Activated naive CD4-positive, alpha-beta T cell treated with anti-CD3 and anti-CD28 coated beads for 36 hours (primary cell): ENCODE measurements at regions of chr14 and their contacts with region 1.

Region 1: GRCh38 chr14:22099942-22100763 is 426.5 kb upstream of the OR4E1 start:
- DNase-seq: peak; percentile 77
- H3K4me3 Mint-ChIP-seq: no peak overlapping the region
- H3K27ac Mint-ChIP-seq: peak overlapping the region; percentile 73
- H3K4me1 Mint-ChIP-seq: peaks cover 35% of the 10 kb centered on the region
- H3K27me3 Mint-ChIP-seq: no peaks in the 10 kb centered on the region

Region 2: DNA sequence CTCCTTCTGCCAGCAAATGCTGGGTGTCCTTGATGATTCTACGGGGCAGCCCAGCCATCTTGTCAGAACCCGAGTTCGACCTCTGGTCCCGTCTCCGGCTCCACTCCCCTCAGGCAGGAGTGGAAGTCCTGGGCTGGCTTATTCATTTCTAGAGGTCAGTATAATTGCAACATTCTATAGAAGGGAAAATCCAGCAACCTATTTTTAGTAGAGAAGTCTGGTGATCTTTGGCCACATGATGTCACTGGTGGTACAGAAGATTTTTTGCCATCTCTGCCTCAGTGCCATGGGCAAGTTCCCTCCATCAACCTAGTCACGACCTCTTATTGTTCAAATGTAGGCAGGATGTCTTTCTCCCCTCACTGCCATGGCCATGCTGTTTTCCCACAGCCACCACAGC is 487.8 kb before region 1 on chr14:
- CTCF ChIA-PET with region 1: no interaction called
- intact Hi-C with region 1: no loop called
- DNase-seq: no peak
- H3K4me3 Mint-ChIP-seq: peak overlapping the region; percentile 1
- H3K27ac Mint-ChIP-seq: no peak overlapping the region
- H3K4me1 Mint-ChIP-seq: no peaks in the 10 kb centered on the region
- H3K27me3 Mint-ChIP-seq: no peaks in the 10 kb centered on the region

Region 3: DNA sequence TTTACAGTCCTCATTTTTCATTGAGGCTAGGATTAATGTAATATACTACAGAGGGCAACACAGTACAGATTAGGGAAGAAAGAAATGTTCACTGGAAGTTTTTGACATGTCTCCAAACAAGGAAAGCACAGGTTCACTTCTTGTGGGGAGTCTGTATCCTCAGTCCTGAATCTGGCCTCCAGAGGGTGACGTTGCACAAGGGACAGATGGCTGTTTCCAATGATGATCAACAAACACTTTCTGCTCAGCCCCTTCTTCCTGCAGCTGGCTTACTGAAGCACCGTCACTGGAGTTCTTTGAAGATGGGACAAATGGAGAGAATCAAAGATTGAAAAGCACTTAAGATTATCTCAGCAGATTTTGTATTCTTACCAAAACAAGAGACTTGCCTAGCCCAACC is 303.2 kb before region 1 on chr14:
- CTCF ChIA-PET with region 1: no interaction called
- intact Hi-C with region 1: no loop called
- DNase-seq: peak; percentile 57
- H3K4me3 Mint-ChIP-seq: peak overlapping the region; percentile 66
- H3K27ac Mint-ChIP-seq: peak overlapping the region; percentile 83
- H3K4me1 Mint-ChIP-seq: peaks cover 14% of the 10 kb centered on the region
- H3K27me3 Mint-ChIP-seq: no peaks in the 10 kb centered on the region

Region 4: DNA sequence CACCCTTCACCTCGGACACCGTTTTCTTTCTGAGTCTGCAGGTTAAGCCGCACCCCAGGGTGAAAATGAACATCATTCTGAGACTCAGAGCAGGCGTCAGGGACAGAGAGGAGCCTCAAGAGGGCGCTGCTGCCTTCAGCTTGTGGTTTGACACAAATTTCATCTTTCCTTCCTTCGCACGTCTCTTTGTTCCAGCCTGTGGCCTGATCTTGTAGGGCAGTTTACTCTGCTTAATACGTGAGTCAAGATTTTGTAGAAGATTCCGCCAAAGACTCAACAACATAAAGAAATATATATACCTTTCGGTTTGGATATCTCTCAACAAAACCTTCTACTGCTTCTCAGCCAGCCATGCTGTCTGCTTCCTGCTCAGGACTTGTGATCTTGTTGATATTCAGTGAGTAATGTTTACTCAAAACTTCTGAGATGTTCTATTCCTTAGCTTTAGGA is 97.3 kb before region 1 on chr14:
- CTCF ChIA-PET with region 1: interaction called, 7 read pairs
- intact Hi-C with region 1: loop called (anchors 1 kb)
- DNase-seq: peak; percentile 86
- H3K4me3 Mint-ChIP-seq: peak overlapping the region; percentile 77
- H3K27ac Mint-ChIP-seq: peak overlapping the region; percentile 90
- H3K4me1 Mint-ChIP-seq: peaks cover 26% of the 10 kb centered on the region
- H3K27me3 Mint-ChIP-seq: no peaks in the 10 kb centered on the region

Region 5: GRCh38 chr14:22039938-22040775 is 60.0 kb before region 1 on chr14:
- CTCF ChIA-PET with region 1: interaction called, 11 read pairs
- intact Hi-C with region 1: loop called (anchors 1 kb)
- DNase-seq: peak; percentile 70
- H3K4me3 Mint-ChIP-seq: peak overlapping the region; percentile 69
- H3K27ac Mint-ChIP-seq: peak overlapping the region; percentile 90
- H3K4me1 Mint-ChIP-seq: peaks cover 16% of the 10 kb centered on the region
- H3K27me3 Mint-ChIP-seq: no peaks in the 10 kb centered on the region

Region 6: GRCh38 chr14:22047115-22047514 is 53.0 kb before region 1 on chr14:
- CTCF ChIA-PET with region 1: interaction called, 8 read pairs
- intact Hi-C with region 1: loop called (anchors 1 kb)
- DNase-seq: peak; percentile 56
- H3K4me3 Mint-ChIP-seq: peak overlapping the region; percentile 34
- H3K27ac Mint-ChIP-seq: peak overlapping the region; percentile 86
- H3K4me1 Mint-ChIP-seq: peaks cover 43% of the 10 kb centered on the region
- H3K27me3 Mint-ChIP-seq: no peaks in the 10 kb centered on the region

Region 7: DNA sequence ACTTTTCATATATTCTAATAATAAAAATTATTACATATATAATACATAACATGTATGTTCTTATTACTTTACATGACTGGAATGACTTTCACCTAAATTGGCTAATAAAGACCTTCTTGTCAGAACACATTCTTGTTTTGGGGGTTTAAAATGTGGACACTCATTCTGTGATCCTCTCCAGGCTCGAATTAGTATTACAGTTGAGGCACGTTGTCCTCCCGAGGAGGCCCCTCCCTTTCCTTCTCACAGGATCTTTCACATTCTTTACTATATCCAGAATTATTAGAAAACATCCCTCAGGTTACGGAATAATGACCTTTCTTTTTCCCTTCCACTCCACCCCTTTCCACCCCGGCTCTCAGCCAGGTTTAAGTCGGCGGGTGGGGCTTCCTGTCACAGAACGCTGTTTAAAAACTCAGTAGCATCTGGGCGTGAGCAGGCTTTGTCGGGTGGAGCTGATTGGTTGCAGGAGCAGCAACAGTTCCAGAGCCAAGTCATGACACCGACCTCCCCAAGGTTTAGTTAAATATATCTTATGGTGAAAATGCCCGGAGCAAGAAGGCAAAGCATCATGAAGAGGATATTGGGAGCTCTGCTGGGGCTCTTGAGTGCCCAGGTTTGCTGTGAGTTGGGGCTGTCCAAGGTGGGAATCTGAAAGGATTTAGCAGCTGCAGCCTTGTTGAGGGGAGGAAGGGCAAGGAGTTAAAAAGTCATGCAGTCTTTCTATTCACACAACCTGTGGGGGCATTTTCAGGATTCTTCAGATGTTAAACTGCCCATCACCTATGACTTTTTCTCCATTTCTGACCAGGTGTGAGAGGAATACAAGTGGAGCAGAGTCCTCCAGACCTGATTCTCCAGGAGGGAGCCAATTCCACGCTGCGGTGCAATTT is 29.8 kb before region 1 on chr14:
- CTCF ChIA-PET with region 1: interaction called, 10 read pairs
- intact Hi-C with region 1: loop called (anchors 5 kb)
- DNase-seq: peak; percentile 74
- H3K4me3 Mint-ChIP-seq: peak overlapping the region; percentile 90
- H3K27ac Mint-ChIP-seq: peak overlapping the region; percentile 94
- H3K4me1 Mint-ChIP-seq: peaks cover 41% of the 10 kb centered on the region
- H3K27me3 Mint-ChIP-seq: no peaks in the 10 kb centered on the region

Region 8: GRCh38 chr14:22084393-22085281 is 15.5 kb before region 1 on chr14:
- CTCF ChIA-PET with region 1: interaction called, 20 read pairs
- intact Hi-C with region 1: loop called (anchors 1 kb)
- DNase-seq: peak; percentile 31
- H3K4me3 Mint-ChIP-seq: peak overlapping the region; percentile 46
- H3K27ac Mint-ChIP-seq: peak overlapping the region; percentile 84
- H3K4me1 Mint-ChIP-seq: peaks cover 25% of the 10 kb centered on the region
- H3K27me3 Mint-ChIP-seq: no peaks in the 10 kb centered on the region